Activated CD8-positive, alpha-beta T cell treated with anti-CD3 and anti-CD28 coated beads for 36 hours (primary cell): ENCODE measurements at regions of chr15 and their contacts with region 1.

Region 1: GRCh38 chr15:57306161-57306943 is 70.0 kb upstream of the CGNL1 start:
- DNase-seq: peak; percentile 89
- ATAC-seq: peak; percentile 93
- H3K4me3 Mint-ChIP-seq: peak overlapping the region; percentile 59
- H3K27ac Mint-ChIP-seq: no peak overlapping the region
- H3K4me1 Mint-ChIP-seq: no peaks in the 10 kb centered on the region
- H3K27me3 Mint-ChIP-seq: peaks cover 14% of the 10 kb centered on the region
- CTCF ChIP-seq: peak; percentile 89

Region 2: GRCh38 chr15:56821721-56822425 is 484.5 kb before region 1 on chr15:
- CTCF ChIA-PET with region 1: interaction called, 19 read pairs
- POLR2A ChIA-PET with region 1: no interaction called
- intact Hi-C with region 1: no loop called
- DNase-seq: peak; percentile 55
- ATAC-seq: peak; percentile 60
- H3K4me3 Mint-ChIP-seq: no peak overlapping the region
- H3K27ac Mint-ChIP-seq: no peak overlapping the region
- H3K4me1 Mint-ChIP-seq: no peaks in the 10 kb centered on the region
- H3K27me3 Mint-ChIP-seq: no peaks in the 10 kb centered on the region
- CTCF ChIP-seq: peak; percentile 66

Region 3: GRCh38 chr15:57321973-57322601 is 15.7 kb after region 1 on chr15:
- CTCF ChIA-PET with region 1: no interaction called
- POLR2A ChIA-PET with region 1: no interaction called
- intact Hi-C with region 1: no loop called
- DNase-seq: no peak
- ATAC-seq: no peak
- H3K4me3 Mint-ChIP-seq: no peak overlapping the region
- H3K27ac Mint-ChIP-seq: no peak overlapping the region
- H3K4me1 Mint-ChIP-seq: peaks cover 5% of the 10 kb centered on the region
- H3K27me3 Mint-ChIP-seq: no peaks in the 10 kb centered on the region
- CTCF ChIP-seq: no peak